Dendritic cell treated with granulocyte-macrophage colony-stimulating factor and Interleukin-4, amounts not matched to agents 40 ng/mL and 50 ng/mL, for 4 days (primary cell): ENCODE measurements at regions of chr5 and their contacts with region 1.

Region 1: DNA sequence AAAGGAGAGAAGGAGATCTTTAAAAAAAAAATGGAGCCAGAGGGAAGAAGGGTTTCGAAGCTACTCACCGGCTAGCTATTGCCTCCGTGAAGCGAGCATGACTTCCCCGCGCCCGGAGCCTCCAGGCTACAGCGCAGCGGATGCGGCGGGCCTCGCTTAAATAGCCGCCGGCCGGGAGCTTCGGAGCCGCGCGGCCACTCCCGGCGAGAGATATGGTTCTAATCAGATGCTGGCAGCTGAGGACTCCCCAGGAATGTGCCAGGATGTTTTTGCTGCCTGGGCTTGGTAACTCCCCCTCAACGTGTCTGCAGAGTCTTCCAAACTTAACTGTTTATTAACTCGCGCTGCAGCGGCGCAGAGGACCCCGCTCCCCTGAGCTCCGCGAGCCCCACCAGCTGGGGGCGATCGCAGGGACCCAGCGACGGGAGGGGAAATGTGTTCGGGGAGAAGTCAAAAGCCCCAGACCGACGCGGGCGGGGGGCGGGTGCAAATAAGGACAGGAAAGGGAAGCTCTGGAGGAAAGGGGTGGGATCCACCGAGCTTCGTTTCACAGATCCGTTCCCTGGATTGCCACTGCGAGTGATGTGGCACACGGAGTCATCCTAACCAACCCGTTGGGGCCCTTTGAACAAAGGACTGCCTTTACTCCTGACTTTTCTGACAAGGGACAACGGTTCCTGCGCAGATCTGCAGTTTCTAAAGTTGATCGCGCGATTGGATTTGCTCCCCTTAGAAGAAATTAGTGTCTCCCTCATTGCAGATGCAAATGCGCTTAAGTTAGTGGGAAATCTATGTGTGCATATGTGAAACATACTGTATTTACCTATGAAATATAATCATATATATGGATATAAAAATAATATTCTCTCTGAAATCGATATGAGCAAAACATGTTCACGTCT is at the start of gene DAB2:
- H3K4me3 Mint-ChIP-seq: peak within 1 kb of the TSS; percentile 96
- H3K27ac Mint-ChIP-seq: peak within 1 kb of the TSS; percentile 96
- H3K4me1 Mint-ChIP-seq: peaks cover 36% of the 10 kb centered on the region
- H3K27me3 Mint-ChIP-seq: no peaks in the 10 kb centered on the region

Region 2: GRCh38 chr5:39387293-39387692 is 37.7 kb before region 1 on chr5:
- intact Hi-C with region 1: loop called (anchors 5 kb)
- H3K4me3 Mint-ChIP-seq: no peak overlapping the region
- H3K27ac Mint-ChIP-seq: no peak overlapping the region
- H3K4me1 Mint-ChIP-seq: no peaks in the 10 kb centered on the region
- H3K27me3 Mint-ChIP-seq: no peaks in the 10 kb centered on the region

Region 3: GRCh38 chr5:39399135-39400036 is 25.6 kb before region 1 on chr5:
- intact Hi-C with region 1: loop called (anchors 1 kb)
- H3K4me3 Mint-ChIP-seq: peak overlapping the region; percentile 37
- H3K27ac Mint-ChIP-seq: peak overlapping the region; percentile 95
- H3K4me1 Mint-ChIP-seq: peaks cover 64% of the 10 kb centered on the region
- H3K27me3 Mint-ChIP-seq: no peaks in the 10 kb centered on the region

Region 4: GRCh38 chr5:39461026-39461682 is 36.2 kb after region 1 on chr5:
- intact Hi-C with region 1: loop called (anchors 5 kb)
- H3K4me3 Mint-ChIP-seq: no peak overlapping the region
- H3K27ac Mint-ChIP-seq: peak overlapping the region; percentile 89
- H3K4me1 Mint-ChIP-seq: peaks cover 76% of the 10 kb centered on the region
- H3K27me3 Mint-ChIP-seq: peaks cover 1% of the 10 kb centered on the region

Region 5: GRCh38 chr5:39526914-39527477 is 102.0 kb after region 1 on chr5:
- intact Hi-C with region 1: loop called (anchors 5 kb)
- H3K4me3 Mint-ChIP-seq: peak overlapping the region; percentile 30
- H3K27ac Mint-ChIP-seq: peak overlapping the region; percentile 89
- H3K4me1 Mint-ChIP-seq: peaks cover 27% of the 10 kb centered on the region
- H3K27me3 Mint-ChIP-seq: no peaks in the 10 kb centered on the region

Region 6: GRCh38 chr5:39547553-39548154 is 122.7 kb after region 1 on chr5:
- intact Hi-C with region 1: loop called (anchors 1 kb)
- H3K4me3 Mint-ChIP-seq: no peak overlapping the region
- H3K27ac Mint-ChIP-seq: no peak overlapping the region
- H3K4me1 Mint-ChIP-seq: peaks cover 7% of the 10 kb centered on the region
- H3K27me3 Mint-ChIP-seq: no peaks in the 10 kb centered on the region